ENCODE measurements at regions of chr7 and their contacts with region 1.

Region 1: DNA sequence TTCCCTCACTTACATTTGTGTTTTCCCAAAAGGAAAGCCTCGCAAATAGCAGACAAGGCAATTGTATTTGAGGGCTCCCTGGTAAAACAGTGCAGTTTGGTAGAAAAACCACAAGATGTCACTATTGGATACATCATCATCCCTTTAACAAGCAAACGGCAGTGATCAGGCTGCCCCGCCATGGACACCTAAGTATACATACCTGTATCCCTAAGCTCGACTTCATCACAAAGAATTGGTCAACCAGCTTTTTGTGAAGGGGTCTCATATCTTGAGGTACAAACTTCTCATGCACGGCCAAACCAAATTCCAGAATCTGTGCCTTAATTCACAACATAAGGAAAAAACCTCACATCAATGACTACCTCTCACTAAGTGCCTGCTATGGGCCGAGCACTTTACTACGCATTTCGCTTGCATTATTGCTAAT is 179.5 kb upstream of the IMMP2L start:
- DNase-seq: no peak
- H3K4me3 ChIP-seq: no peak overlapping the region
- H3K27ac ChIP-seq: no peak overlapping the region
- H3K4me1 ChIP-seq: no peaks in the 10 kb centered on the region
- H3K27me3 ChIP-seq: no peaks in the 10 kb centered on the region
- CTCF ChIP-seq: peak; percentile 65 to 74 (median 65)
- EP300 ChIP-seq: no peak
- POLR2A ChIP-seq: no peak

Region 2: DNA sequence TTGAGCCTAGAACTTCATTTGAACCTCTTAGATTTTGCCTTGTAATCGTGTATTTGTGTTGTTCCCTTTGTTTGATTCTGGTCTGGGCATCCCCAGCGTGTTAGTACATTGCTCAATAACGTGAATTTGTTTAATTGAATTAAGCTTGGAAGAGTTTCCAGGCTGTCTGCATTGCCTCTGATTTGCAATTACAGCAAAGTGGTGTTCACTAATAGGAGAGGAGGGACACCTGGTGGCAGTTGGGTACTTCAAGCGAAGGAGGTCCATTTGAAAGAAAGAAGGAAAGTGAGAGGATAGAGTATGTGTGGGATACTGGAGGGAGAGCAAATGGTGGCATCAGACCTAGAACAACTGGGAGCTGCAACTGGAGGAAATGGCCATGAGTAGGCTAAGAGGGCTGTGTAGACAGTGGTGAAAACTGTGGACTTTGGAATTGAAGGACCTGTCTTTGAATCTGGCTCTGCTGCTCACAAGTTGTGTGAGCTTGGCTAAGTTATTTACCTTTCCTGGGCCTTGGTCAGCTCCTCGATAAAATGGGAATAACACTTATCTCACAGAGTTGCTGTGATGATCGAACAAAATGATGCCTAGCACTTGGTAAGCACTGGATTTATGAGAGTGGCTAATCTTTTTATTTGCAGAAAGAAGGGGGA is 754.1 kb after region 1 on chr7:
- intact Hi-C with region 1: loop called (anchors 5 kb)
- DNase-seq: peak; percentile 92
- H3K4me3 ChIP-seq: no peak overlapping the region
- H3K27ac ChIP-seq: no peak overlapping the region
- H3K4me1 ChIP-seq: peaks cover 0 to 5% (median 0%) of the 10 kb centered on the region in 4 donors
- H3K27me3 ChIP-seq: no peaks in the 10 kb centered on the region
- CTCF ChIP-seq: peak; percentile 66 to 69 (median 67)
- EP300 ChIP-seq: no peak
- POLR2A ChIP-seq: no peak

Measured in esophagus muscularis mucosa (tissue), 4 donors.